H1 (cell line): ENCODE measurements at regions of chr5 and their contacts with region 1.

Region 1: DNA sequence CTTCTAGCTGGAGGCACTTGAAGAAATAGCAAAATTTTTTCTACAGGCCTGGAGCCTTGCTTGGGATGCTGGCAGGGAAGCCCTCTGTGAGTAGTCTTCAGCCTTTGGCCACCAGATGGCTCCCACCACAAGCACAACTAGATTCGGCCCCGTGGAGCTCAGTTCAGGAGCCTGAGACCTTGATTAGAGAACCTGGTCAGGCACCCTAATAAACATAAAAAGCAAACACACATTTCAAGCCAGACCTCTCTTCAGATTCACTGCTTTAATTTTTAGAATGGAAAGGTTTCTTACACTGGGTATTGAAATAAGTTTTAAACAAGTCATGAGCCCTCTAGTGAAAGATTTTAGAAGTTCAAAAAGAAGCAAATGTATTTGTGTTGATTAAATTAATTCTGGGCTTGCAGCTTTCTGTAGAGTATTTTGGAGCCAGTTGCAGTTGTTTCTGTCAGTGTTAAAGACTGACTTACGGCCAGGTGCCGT is 41.4 kb downstream of the GLRX start:
- DNase-seq: peak; percentile 44 to 73
- H3K4me3 ChIP-seq: no peak overlapping the region
- H3K27ac ChIP-seq: no peak overlapping the region
- H3K4me1 ChIP-seq: no peaks in the 10 kb centered on the region
- H3K27me3 ChIP-seq: no peaks in the 10 kb centered on the region
- CTCF ChIP-seq: peak; percentile 69 to 94 (median 84)
- EP300 ChIP-seq: no peak
- POLR2A ChIP-seq: no peak
- RAD21 ChIP-seq: peak; percentile 95 to 96

Region 2: GRCh38 chr5:95583992-95584391 is 197.2 kb before region 1 on chr5:
- CTCF ChIA-PET with region 1: no interaction called
- POLR2A ChIA-PET with region 1: no interaction called
- DNase-seq: no peak
- H3K4me3 ChIP-seq: no peak overlapping the region
- H3K27ac ChIP-seq: no peak overlapping the region
- H3K4me1 ChIP-seq: no peaks in the 10 kb centered on the region
- H3K27me3 ChIP-seq: no peaks in the 10 kb centered on the region
- CTCF ChIP-seq: no peak
- EP300 ChIP-seq: no peak
- POLR2A ChIP-seq: no peak
- RAD21 ChIP-seq: no peak

Region 3: DNA sequence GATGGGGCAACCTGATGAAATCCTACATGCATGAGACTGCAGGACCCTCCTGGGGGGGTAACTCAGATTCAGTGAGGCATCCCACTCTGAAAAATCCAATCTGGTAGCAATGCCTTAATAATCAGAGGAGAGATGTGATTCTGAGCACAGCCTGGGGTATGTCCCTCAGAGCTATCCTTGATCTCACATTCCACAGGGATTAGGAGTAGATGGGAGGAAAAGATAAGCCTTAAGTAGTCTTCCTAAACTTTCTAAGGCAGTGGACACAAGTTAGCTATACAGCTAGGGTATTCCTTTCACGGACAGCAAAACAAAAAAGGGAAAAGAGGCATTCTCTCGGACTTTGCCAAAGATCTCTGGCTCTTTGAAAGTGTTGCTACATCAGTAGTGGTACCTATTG is 94.5 kb before region 1 on chr5:
- CTCF ChIA-PET with region 1: no interaction called
- POLR2A ChIA-PET with region 1: no interaction called
- DNase-seq: no peak
- H3K4me3 ChIP-seq: no peak overlapping the region
- H3K27ac ChIP-seq: no peak overlapping the region
- H3K4me1 ChIP-seq: no peaks in the 10 kb centered on the region
- H3K27me3 ChIP-seq: no peaks in the 10 kb centered on the region
- CTCF ChIP-seq: no peak
- EP300 ChIP-seq: no peak
- POLR2A ChIP-seq: no peak
- RAD21 ChIP-seq: no peak

Region 4: DNA sequence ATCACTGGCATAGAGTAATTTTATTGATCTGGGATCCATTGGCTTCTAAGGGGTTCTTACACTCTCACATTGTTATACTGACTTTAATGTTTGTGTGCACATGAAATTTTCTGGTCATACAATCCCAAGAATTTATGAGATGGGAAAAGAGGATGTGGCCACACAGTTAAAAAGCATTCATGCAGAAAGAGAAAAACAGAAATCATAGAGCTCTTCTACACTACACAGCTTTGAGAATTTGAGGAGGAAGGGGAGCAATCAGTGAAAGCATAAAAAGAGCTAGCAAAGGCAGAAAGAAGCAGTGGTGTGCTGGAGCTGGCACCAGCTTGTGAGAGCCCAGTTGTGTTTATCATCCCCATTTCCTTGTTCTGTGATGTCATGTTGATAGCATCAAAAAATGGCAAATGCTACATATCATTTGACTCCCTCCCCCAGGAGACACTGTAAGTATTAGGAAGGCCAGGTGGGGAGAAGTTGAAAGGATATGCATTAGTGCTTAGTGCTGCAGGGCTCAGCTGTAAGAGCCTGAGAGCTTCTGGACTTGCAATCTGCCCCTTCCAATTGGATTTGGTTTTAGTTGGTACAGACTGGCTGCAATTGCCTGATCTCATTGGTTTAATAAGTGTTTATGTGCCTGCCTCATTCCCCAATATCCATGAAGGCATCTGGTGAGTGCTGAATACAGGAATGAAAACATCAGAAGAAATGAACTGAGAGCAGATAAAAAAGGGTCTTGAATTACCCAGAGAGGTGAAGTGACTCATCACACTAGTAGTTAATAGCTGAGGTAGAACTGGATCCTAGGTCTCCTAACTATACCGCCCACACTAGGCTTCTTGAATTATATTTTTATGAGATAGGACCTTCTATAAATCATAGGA is 19.1 kb before region 1 on chr5:
- CTCF ChIA-PET with region 1: interaction called, 18 read pairs
- POLR2A ChIA-PET with region 1: no interaction called
- DNase-seq: no peak
- H3K4me3 ChIP-seq: no peak overlapping the region
- H3K27ac ChIP-seq: no peak overlapping the region
- H3K4me1 ChIP-seq: no peaks in the 10 kb centered on the region
- H3K27me3 ChIP-seq: no peaks in the 10 kb centered on the region
- CTCF ChIP-seq: no peak
- EP300 ChIP-seq: no peak
- POLR2A ChIP-seq: no peak
- RAD21 ChIP-seq: no peak

Region 5: DNA sequence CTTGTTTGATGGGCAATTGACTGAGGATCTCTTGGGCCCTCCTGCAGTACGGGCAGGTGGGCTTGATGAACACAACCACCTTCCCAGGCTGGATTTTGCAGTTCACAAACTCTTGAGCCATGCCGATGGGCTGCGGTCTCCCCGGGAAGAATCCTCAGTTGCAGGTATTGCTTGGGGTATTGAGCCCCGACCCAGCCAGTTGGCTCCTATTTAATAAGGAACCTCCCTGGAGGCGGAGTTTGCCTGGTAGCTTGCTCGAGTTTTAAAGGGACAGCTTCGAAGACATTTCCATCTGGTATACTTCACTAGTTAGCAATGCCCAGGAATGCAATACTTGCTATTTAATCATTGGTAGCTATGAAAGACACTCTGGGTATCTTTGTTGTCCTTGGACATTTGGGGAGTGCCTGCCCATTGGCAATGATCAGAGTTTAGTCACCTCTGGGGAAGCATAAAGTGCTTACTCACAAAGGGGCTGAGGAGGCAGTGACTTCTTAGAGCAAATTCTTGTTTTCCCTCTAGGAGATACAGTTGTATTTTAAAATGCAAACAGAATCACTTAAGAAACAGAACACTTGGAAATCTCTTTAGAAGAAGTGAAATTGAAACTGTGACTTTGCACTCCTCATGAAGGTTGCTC is 41.5 kb after region 1 on chr5 and contains the start of gene GLRX:
- CTCF ChIA-PET with region 1: interaction called, 18 read pairs
- POLR2A ChIA-PET with region 1: interaction called, 4 read pairs
- DNase-seq: peak; percentile 47 to 68
- H3K4me3 ChIP-seq: peak within 1 kb of the TSS; percentile 73 to 89 (median 78)
- H3K27ac ChIP-seq: no peak within 1 kb of the TSS
- H3K4me1 ChIP-seq: peaks cover 5 to 20% (median 16%) of the 10 kb centered on the region in 4 experiments; a peak in 6 of 7 replicates
- H3K27me3 ChIP-seq: no peaks in the 10 kb centered on the region; a peak in 1 of 7 replicates
- CTCF ChIP-seq: no peak
- EP300 ChIP-seq: no peak
- POLR2A ChIP-seq: peak in 1 of 2 experiments; percentile 80; a peak in 2 of 3 replicates
- RAD21 ChIP-seq: no peak
- total RNA-seq, gene GLRX: 21.6 and 22.9 TPM in 2 replicates

Region 6: DNA sequence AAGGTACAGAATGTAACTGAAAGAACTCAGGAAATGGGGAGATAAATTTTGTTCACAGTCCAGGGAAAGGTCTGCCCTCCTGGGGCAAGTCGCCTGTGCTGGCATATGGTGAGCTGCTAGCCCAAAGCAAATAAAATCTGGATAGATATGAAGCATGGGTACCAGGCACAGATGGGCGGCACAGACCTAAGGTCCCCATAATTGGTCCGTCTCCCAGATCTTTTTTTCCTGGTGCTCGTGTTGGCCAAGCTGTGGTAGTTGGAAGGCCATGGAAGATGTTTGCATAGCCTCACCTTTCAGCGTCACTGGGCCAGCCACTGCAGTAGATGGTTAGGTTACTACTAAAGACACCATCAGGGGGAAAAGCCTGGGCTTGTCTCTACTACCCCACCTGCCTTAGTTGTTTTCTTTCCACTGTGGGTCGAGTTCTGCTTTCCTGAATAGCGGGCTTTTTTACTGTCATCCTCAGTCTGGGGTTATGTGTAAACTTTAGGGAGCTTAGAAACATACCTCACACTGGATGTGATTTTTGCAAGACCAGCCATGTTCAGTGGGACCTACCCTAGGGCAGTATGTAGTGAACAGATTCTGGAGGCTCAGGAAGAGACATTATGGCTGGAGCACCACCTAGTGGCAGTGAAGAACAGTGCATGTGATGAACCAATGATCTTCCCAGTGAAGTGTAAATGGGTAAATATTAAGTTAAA is 65.6 kb after region 1 on chr5:
- CTCF ChIA-PET with region 1: interaction called, 120 read pairs
- POLR2A ChIA-PET with region 1: no interaction called
- DNase-seq: peak in 1 of 2 experiments; percentile 71
- H3K4me3 ChIP-seq: no peak overlapping the region
- H3K27ac ChIP-seq: no peak overlapping the region
- H3K4me1 ChIP-seq: no peaks in the 10 kb centered on the region
- H3K27me3 ChIP-seq: no peaks in the 10 kb centered on the region
- CTCF ChIP-seq: peak; percentile 20 to 92 (median 88)
- EP300 ChIP-seq: no peak
- POLR2A ChIP-seq: no peak
- RAD21 ChIP-seq: peak; percentile 98

Region 7: DNA sequence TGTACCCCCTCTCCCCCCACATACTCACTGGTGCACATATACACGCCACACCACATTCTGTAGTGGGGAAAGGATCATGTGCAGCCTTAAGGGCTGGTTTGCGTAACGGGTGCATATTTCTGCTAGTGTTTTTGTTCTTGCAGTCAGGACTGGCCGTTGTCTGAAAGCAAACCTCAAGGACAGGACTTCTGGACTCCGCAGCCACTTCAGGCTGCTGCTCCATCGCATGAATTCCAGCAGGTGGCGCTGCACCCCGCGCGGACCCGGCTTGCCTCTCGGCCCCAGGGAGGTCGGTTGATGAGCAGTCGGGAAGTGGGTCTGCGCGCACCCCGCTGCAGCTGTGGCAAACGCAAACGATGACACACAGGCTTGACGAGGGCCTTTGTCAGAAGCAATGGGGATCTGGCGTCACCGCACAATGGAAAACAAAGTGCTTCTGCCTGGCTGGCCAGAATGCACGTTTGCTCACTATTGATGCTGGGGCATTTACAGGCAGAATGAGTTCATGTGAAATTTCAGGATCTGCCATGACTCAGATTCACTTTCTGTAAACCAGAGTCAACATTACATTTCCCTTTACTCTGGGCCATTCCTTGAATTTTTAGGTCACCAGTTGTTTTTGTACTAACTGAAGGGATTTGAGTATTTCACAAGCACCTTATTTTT is 77.7 kb after region 1 on chr5:
- CTCF ChIA-PET with region 1: interaction called, 19 read pairs
- POLR2A ChIA-PET with region 1: no interaction called
- DNase-seq: peak; percentile 82 to 96
- H3K4me3 ChIP-seq: peak overlapping the region in 2 of 4 experiments; percentile 7 to 32; a peak in 1 of 8 replicates
- H3K27ac ChIP-seq: no peak overlapping the region
- H3K4me1 ChIP-seq: no peaks in the 10 kb centered on the region; a peak in 2 of 7 replicates
- H3K27me3 ChIP-seq: no peaks in the 10 kb centered on the region; a peak in 1 of 7 replicates
- CTCF ChIP-seq: peak; percentile 89 to 97 (median 94)
- EP300 ChIP-seq: peak in 1 of 2 experiments; percentile 39; a peak in 1 of 3 replicates
- POLR2A ChIP-seq: no peak
- RAD21 ChIP-seq: peak; percentile 99

Region 8: GRCh38 chr5:96175090-96175489 is 393.9 kb after region 1 on chr5:
- CTCF ChIA-PET with region 1: no interaction called
- POLR2A ChIA-PET with region 1: no interaction called
- DNase-seq: no peak
- H3K4me3 ChIP-seq: no peak overlapping the region
- H3K27ac ChIP-seq: no peak overlapping the region
- H3K4me1 ChIP-seq: no peaks in the 10 kb centered on the region
- H3K27me3 ChIP-seq: no peaks in the 10 kb centered on the region
- CTCF ChIP-seq: peak in 1 of 3 experiments; percentile 29; a peak in 1 of 4 replicates
- EP300 ChIP-seq: no peak
- POLR2A ChIP-seq: no peak
- RAD21 ChIP-seq: peak; percentile 16 to 24; a peak in 3 of 4 replicates